HepG2 (cell line): ENCODE measurements at regions of chr6 and their contacts with region 1.

Region 1: GRCh38 chr6:41505122-41506049 is 40.8 kb upstream of the FOXP4 start:
- DNase-seq: no peak
- ATAC-seq: no peak
- H3K4me3 ChIP-seq: no peak overlapping the region
- H3K27ac ChIP-seq: no peak overlapping the region
- H3K4me1 ChIP-seq: peaks cover 76% of the 10 kb centered on the region
- H3K27me3 ChIP-seq: no peaks in the 10 kb centered on the region; a peak in 1 of 5 replicates
- CTCF ChIP-seq: no peak
- EP300 ChIP-seq: no peak
- POLR2A ChIP-seq: no peak
- RAD21 ChIP-seq: no peak

Region 2: DNA sequence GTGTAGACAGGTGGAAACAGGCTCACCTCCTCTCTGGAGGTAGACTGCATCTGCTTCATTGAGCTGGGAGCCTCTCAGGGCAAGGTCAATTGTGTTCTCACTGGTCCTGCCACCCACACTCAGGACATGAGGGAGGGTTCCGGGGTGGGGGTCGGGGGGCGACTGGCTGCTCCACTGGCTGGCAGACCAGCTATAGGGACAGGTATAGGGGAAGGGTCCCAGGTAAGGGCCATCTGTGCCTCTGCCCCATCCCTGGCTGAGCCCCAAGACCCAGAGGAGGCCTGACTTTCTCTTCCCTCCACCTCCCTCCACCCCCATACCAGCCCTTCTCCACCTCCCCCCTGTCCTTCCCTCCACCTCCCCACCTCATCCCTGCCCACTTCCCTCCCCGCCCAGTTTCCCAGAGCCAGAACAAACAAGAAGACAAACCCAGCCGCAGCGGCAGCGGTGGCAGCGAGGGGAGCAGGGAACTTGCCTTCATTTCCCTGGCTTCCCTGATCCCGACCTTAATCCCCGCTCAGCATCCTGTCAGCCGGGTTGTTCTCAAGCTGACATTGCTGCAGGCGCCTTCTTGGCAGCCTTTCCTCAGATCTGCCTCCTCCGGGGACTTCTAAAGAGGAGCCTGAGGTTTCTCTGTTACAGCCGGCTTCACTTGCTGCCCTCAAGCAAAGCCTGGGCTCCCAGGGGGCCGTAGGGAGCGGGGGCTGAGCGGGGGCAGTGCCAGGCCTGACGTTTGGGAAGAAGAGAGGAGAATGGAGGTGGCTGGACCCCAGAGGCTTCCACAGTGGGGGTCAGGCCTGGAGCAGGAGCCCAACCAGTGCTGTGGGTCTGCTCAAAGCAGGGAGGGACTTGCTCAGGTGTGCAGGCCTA is 22.6 kb after region 1 on chr6:
- CTCF ChIA-PET with region 1: no interaction called
- POLR2A ChIA-PET with region 1: interaction called, 187 read pairs
- in situ Hi-C with region 1: no loop called
- intact Hi-C with region 1: no loop called
- DNase-seq: peak; percentile 41
- ATAC-seq: peak; percentile 22
- H3K4me3 ChIP-seq: peak overlapping the region; percentile 23 to 49 (median 25); a peak in 2 of 6 replicates
- H3K27ac ChIP-seq: peak overlapping the region; percentile 18
- H3K4me1 ChIP-seq: peaks cover 70% of the 10 kb centered on the region
- H3K27me3 ChIP-seq: no peaks in the 10 kb centered on the region
- CTCF ChIP-seq: no peak
- EP300 ChIP-seq: no peak
- POLR2A ChIP-seq: no peak
- RAD21 ChIP-seq: no peak